Calu3 (cell line): ENCODE measurements at regions of chr11 and their contacts with region 1.

Region 1: GRCh38 chr11:38791302-38791961 is 2193.4 kb upstream of the RAG2 start:
- DNase-seq: peak; percentile 56
- H3K4me3 Mint-ChIP-seq: no peak overlapping the region
- H3K27ac Mint-ChIP-seq: no peak overlapping the region
- H3K4me1 Mint-ChIP-seq: no peaks in the 10 kb centered on the region
- H3K27me3 Mint-ChIP-seq: no peaks in the 10 kb centered on the region
- CTCF ChIP-seq: peak; percentile 64

Region 2: GRCh38 chr11:37002831-37003230 is 1788.6 kb before region 1 on chr11:
- CTCF ChIA-PET with region 1: no interaction called
- intact Hi-C with region 1: loop called (anchors 5 kb)
- DNase-seq: no peak
- H3K4me3 Mint-ChIP-seq: no peak overlapping the region
- H3K27ac Mint-ChIP-seq: no peak overlapping the region
- H3K4me1 Mint-ChIP-seq: no peaks in the 10 kb centered on the region
- H3K27me3 Mint-ChIP-seq: no peaks in the 10 kb centered on the region
- CTCF ChIP-seq: no peak

Region 3: DNA sequence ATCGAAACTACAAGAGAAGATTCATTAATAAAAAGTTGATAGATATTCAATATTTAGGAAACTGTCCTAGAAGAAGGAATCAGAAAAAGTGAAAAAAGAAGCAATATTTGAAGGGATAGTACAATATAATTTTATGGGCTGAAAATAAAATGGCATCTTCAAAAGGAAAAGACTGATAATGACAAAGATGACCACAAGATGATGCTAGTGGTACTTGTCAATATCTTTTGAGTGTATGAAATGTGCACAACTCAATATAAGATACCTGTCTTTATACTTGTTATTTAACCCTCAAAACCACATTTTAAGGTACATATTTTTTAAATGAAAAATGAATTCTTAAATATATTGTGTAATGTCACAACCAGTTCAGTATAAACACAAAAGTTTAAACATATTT is 1133.8 kb before region 1 on chr11:
- CTCF ChIA-PET with region 1: interaction called, 3 read pairs
- intact Hi-C with region 1: loop called (anchors 1 kb)
- DNase-seq: no peak
- H3K4me3 Mint-ChIP-seq: no peak overlapping the region
- H3K27ac Mint-ChIP-seq: no peak overlapping the region
- H3K4me1 Mint-ChIP-seq: no peaks in the 10 kb centered on the region
- H3K27me3 Mint-ChIP-seq: no peaks in the 10 kb centered on the region
- CTCF ChIP-seq: no peak